B cell (primary cell): ENCODE measurements at regions of chr4 and their contacts with region 1.

Region 1: GRCh38 chr4:145936142-145936996 is 2.3 kb downstream of the ZNF827 start:
- DNase-seq: peak; percentile 87
- ATAC-seq: peak; percentile 60
- H3K4me3 ChIP-seq: peak overlapping the region; percentile 61 to 97 (median 76)
- H3K4me3 Mint-ChIP-seq: peak overlapping the region; percentile 89
- H3K27ac ChIP-seq: peak overlapping the region; percentile 54 to 67
- H3K27ac Mint-ChIP-seq: peak overlapping the region; percentile 97
- H3K4me1 ChIP-seq: peaks cover 15 to 28% of the 10 kb centered on the region in 2 donors
- H3K4me1 Mint-ChIP-seq: peaks cover 43% of the 10 kb centered on the region
- H3K27me3 ChIP-seq: no peaks in the 10 kb centered on the region
- H3K27me3 Mint-ChIP-seq: no peaks in the 10 kb centered on the region
- CTCF ChIP-seq: peak; percentile 50

Region 2: GRCh38 chr4:145180298-145181090 is 755.9 kb before region 1 on chr4 and contains the start of gene OTUD4:
- CTCF ChIA-PET with region 1: no interaction called
- POLR2A ChIA-PET with region 1: interaction called, 7 read pairs
- intact Hi-C with region 1: loop called (anchors 10 kb)
- DNase-seq: peak; percentile 97
- ATAC-seq: peak; percentile 82
- H3K4me3 ChIP-seq: peak within 1 kb of the TSS; percentile 68 to 93 (median 81)
- H3K4me3 Mint-ChIP-seq: peak within 1 kb of the TSS; percentile 94
- H3K27ac ChIP-seq: peak within 1 kb of the TSS; percentile 94 to 97
- H3K27ac Mint-ChIP-seq: peak within 1 kb of the TSS; percentile 96
- H3K4me1 ChIP-seq: peaks cover 29 to 35% of the 10 kb centered on the region in 2 donors
- H3K4me1 Mint-ChIP-seq: peaks cover 34% of the 10 kb centered on the region
- H3K27me3 ChIP-seq: no peaks in the 10 kb centered on the region
- H3K27me3 Mint-ChIP-seq: no peaks in the 10 kb centered on the region
- CTCF ChIP-seq: peak; percentile 31
- total RNA-seq, gene OTUD4: 51.0 and 55.7 TPM in 2 replicates

Region 3: DNA sequence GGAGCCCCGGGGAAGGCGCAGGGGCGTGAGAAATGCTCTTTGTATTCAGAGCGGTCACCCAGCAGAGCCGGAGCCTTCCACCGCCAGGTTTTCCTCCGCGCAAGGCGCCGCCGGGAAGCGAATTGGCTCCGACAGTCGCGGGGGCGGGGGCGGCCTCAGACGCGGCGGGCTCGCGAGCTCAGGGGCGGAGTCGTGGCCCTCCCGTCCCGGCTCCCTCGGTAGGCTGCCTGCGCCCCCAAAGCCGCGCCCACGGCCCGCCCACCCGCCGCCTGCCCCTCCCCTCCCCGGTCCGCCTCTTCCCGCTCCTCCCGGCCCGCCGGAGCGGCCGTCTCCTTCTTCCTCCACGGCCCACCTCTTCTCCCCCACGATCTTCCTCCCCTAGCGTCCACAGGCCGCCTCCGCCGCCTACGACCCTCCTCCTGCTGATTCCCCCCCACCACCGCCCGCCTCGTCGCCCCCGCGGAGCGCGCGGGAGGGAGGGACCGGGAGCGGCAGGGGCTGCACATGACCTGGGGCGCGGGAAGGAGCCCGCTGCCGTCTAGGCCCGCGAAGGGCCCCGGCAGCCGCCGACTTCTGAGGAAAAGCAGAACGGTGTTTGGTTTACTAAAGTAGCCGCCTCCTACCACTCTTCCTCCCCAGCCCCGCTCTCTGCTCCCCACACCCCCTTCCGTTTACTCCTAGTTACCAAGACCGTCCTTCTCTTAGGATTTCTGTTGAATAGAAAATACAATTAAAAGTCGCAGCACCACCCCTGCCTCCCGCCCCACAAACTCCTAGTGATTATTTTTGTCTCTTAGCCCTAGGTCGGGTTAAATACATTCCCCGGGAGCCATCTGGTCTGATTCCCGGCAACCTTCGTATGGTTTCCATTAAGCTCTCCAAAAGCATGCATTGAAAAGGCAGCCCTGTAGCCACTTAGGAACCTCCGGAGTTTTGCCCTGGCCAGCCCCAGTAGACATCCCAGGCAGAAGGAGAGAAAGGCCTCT is 203.2 kb before region 1 on chr4:
- CTCF ChIA-PET with region 1: no interaction called
- POLR2A ChIA-PET with region 1: no interaction called
- intact Hi-C with region 1: loop called (anchors 1 kb)
- DNase-seq: peak; percentile 86
- ATAC-seq: peak; percentile 99
- H3K4me3 ChIP-seq: peak overlapping the region; percentile 48 to 94 (median 65)
- H3K4me3 Mint-ChIP-seq: peak overlapping the region; percentile 80
- H3K27ac ChIP-seq: peak overlapping the region in 1 of 2 donors; percentile 44
- H3K27ac Mint-ChIP-seq: peak overlapping the region; percentile 34
- H3K4me1 ChIP-seq: peaks cover 5 to 14% of the 10 kb centered on the region in 2 donors
- H3K4me1 Mint-ChIP-seq: peaks cover 20% of the 10 kb centered on the region
- H3K27me3 ChIP-seq: peaks cover 0 to 4% (median 2%) of the 10 kb centered on the region in 4 experiments
- H3K27me3 Mint-ChIP-seq: peaks cover 17% of the 10 kb centered on the region
- CTCF ChIP-seq: no peak

Region 4: DNA sequence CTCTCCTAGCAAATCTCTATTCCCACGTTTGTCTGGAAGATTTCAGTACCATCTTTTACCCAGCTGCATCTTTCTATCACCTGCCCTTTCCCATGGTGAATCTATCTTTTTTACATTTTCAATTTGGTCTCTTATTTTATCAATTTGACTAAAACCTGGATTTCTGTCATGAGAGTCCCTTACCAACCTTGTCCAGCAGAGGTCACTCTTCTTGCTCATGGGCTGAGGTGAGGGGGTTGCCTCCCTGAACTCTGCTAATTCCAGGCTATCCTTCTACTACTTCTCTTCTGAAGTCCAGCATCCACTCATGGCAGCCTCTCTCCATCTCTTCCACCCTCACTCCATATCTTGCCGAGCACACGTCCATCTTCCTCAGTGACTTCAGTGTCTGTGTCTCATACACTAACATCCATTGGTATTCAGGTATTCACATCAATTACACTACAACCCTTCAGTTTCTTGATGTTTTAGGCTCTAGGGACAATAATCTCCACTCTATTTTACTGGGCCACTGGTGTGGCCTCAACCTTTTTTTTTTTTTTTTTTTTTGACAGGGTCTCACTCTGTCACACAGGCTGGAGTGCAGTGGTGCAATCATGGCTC is 20.0 kb after region 1 on chr4:
- CTCF ChIA-PET with region 1: interaction called, 3 read pairs
- POLR2A ChIA-PET with region 1: interaction called, 3 read pairs
- intact Hi-C with region 1: loop called (anchors 2 kb)
- DNase-seq: peak; percentile 78
- ATAC-seq: peak; percentile 61
- H3K4me3 ChIP-seq: no peak overlapping the region
- H3K4me3 Mint-ChIP-seq: no peak overlapping the region
- H3K27ac ChIP-seq: no peak overlapping the region
- H3K27ac Mint-ChIP-seq: no peak overlapping the region
- H3K4me1 ChIP-seq: peaks cover 5 to 6% of the 10 kb centered on the region in 2 donors
- H3K4me1 Mint-ChIP-seq: peaks cover 6% of the 10 kb centered on the region
- H3K27me3 ChIP-seq: no peaks in the 10 kb centered on the region
- H3K27me3 Mint-ChIP-seq: no peaks in the 10 kb centered on the region
- CTCF ChIP-seq: peak; percentile 86

Region 5: GRCh38 chr4:146059865-146060264 is 123.5 kb after region 1 on chr4:
- CTCF ChIA-PET with region 1: no interaction called
- POLR2A ChIA-PET with region 1: no interaction called
- intact Hi-C with region 1: loop called (anchors 5 kb)
- DNase-seq: peak; percentile 95
- ATAC-seq: peak; percentile 89
- H3K4me3 ChIP-seq: peak overlapping the region in 3 of 5 experiments; percentile 21 to 44 (median 41)
- H3K4me3 Mint-ChIP-seq: no peak overlapping the region
- H3K27ac ChIP-seq: peak overlapping the region; percentile 82 to 85
- H3K27ac Mint-ChIP-seq: no peak overlapping the region
- H3K4me1 ChIP-seq: peaks cover 60 to 66% of the 10 kb centered on the region in 2 donors
- H3K4me1 Mint-ChIP-seq: peaks cover 40% of the 10 kb centered on the region
- H3K27me3 ChIP-seq: peaks cover 0 to 4% (median 0%) of the 10 kb centered on the region in 4 experiments
- H3K27me3 Mint-ChIP-seq: no peaks in the 10 kb centered on the region
- CTCF ChIP-seq: no peak

Region 6: DNA sequence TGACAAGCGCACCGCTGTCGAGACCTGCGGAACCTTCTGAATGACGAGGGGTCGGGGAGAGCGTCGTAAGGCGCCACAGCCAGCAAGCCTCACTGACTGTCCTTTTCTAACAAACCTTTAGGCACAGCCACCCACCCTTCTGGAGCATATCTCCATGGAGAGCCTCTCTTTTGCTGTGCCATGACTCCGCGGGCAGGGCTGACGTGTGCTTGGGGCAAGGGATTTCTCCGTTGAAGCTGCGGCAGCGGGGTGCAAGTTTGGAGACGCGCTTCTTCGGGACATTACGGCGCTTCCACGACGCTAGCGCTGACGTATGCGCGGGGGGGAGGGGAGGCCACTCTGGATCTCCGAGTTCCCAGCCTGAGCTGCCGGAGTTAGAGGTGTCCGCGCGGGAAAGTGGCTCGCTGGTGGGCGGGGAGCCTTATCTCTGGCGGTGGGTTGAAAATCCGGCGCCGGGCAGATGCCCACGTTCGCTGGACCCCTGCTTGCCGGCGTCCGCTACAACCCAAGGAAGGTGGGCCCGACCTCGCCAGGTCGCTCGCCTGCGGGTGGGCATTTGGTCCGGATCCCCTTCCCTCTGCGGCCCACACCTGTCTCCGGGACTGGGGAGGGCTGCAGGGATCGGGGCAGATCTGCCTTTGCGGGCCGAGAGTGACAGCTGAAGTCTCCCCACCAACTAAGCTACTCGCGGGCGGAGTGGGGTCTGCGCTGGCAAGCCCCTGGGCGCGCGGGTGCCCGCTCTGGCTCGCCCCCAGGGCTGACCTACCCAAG is 585.9 kb after region 1 on chr4:
- CTCF ChIA-PET with region 1: no interaction called
- POLR2A ChIA-PET with region 1: no interaction called
- intact Hi-C with region 1: loop called (anchors 5 kb)
- DNase-seq: peak; percentile 86
- ATAC-seq: peak; percentile 75
- H3K4me3 ChIP-seq: peak overlapping the region; percentile 61 to 98 (median 96)
- H3K4me3 Mint-ChIP-seq: no peak overlapping the region
- H3K27ac ChIP-seq: peak overlapping the region; percentile 62 to 75
- H3K27ac Mint-ChIP-seq: no peak overlapping the region
- H3K4me1 ChIP-seq: peaks cover 18 to 22% of the 10 kb centered on the region in 2 donors
- H3K4me1 Mint-ChIP-seq: peaks cover 22% of the 10 kb centered on the region
- H3K27me3 ChIP-seq: no peaks in the 10 kb centered on the region
- H3K27me3 Mint-ChIP-seq: no peaks in the 10 kb centered on the region
- CTCF ChIP-seq: no peak